Activated naive CD4-positive, alpha-beta T cell treated with anti-CD3 and anti-CD28 coated beads for 36 hours (primary cell): ENCODE measurements at regions of chr4 and their contacts with region 1.

Region 1: GRCh38 chr4:73019462-73020047 is 50.0 kb downstream of the COX18 start:
- DNase-seq: peak; percentile 19
- H3K4me3 Mint-ChIP-seq: no peak overlapping the region
- H3K27ac Mint-ChIP-seq: no peak overlapping the region
- H3K4me1 Mint-ChIP-seq: peaks cover 1% of the 10 kb centered on the region
- H3K27me3 Mint-ChIP-seq: peaks cover 2% of the 10 kb centered on the region

Region 2: GRCh38 chr4:72295966-72296557 is 723.5 kb before region 1 on chr4:
- CTCF ChIA-PET with region 1: no interaction called
- intact Hi-C with region 1: loop called (anchors 1 kb)
- DNase-seq: no peak
- H3K4me3 Mint-ChIP-seq: no peak overlapping the region
- H3K27ac Mint-ChIP-seq: no peak overlapping the region
- H3K4me1 Mint-ChIP-seq: no peaks in the 10 kb centered on the region
- H3K27me3 Mint-ChIP-seq: peaks cover 10% of the 10 kb centered on the region

Region 3: GRCh38 chr4:72326692-72327632 is 692.6 kb before region 1 on chr4:
- CTCF ChIA-PET with region 1: interaction called, 7 read pairs
- intact Hi-C with region 1: loop called (anchors 2 kb)
- DNase-seq: no peak
- H3K4me3 Mint-ChIP-seq: no peak overlapping the region
- H3K27ac Mint-ChIP-seq: no peak overlapping the region
- H3K4me1 Mint-ChIP-seq: no peaks in the 10 kb centered on the region
- H3K27me3 Mint-ChIP-seq: peaks cover 10% of the 10 kb centered on the region

Region 4: GRCh38 chr4:72505314-72505744 is 514.2 kb before region 1 on chr4:
- CTCF ChIA-PET with region 1: no interaction called
- intact Hi-C with region 1: loop called (anchors 1 kb)
- DNase-seq: no peak
- H3K4me3 Mint-ChIP-seq: no peak overlapping the region
- H3K27ac Mint-ChIP-seq: no peak overlapping the region
- H3K4me1 Mint-ChIP-seq: no peaks in the 10 kb centered on the region
- H3K27me3 Mint-ChIP-seq: peaks cover 11% of the 10 kb centered on the region